Prostate gland (tissue), 2 donors: ENCODE measurements at regions of chrX and their contacts with region 1.

Region 1: GRCh38 chrX:49915361-49916222 is 6.8 kb upstream of the CLCN5 start:
- DNase-seq: peak; percentile 9
- H3K4me3 ChIP-seq: no peak overlapping the region
- H3K27ac ChIP-seq: no peak overlapping the region
- H3K4me1 ChIP-seq: no peaks in the 10 kb centered on the region
- H3K27me3 ChIP-seq: no peaks in the 10 kb centered on the region
- CTCF ChIP-seq: peak; percentile 42 to 65 (median 62)
- POLR2A ChIP-seq: no peak

Region 2: DNA sequence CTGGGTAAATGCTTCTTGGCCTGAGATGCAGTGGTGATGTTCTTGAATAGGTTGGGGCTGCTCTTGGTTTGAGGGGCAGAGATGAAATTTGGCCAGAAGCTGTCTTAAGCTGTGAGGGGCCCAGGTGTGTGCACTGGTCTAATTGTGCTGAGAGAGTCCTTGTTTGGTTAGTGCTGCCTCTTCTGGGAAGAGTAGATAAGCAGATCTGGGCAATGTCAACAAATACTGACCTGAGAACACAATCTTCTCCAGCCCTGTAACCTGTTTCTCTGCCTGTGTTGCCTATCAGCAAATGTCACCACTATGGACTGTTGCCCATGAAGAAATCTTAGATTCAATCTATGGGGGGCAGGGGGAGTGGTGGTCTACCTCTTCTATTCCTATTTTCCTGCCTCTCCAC is 53.5 kb before region 1 on chrX:
- intact Hi-C with region 1: no loop called
- DNase-seq: no peak
- H3K4me3 ChIP-seq: no peak overlapping the region
- H3K27ac ChIP-seq: no peak overlapping the region
- H3K4me1 ChIP-seq: no peaks in the 10 kb centered on the region
- H3K27me3 ChIP-seq: no peaks in the 10 kb centered on the region
- CTCF ChIP-seq: no peak
- POLR2A ChIP-seq: no peak

Region 3: GRCh38 chrX:49884290-49884862 is 31.2 kb before region 1 on chrX:
- intact Hi-C with region 1: loop called (anchors 5 kb)
- DNase-seq: peak; percentile 17
- H3K4me3 ChIP-seq: no peak overlapping the region
- H3K27ac ChIP-seq: no peak overlapping the region
- H3K4me1 ChIP-seq: no peaks in the 10 kb centered on the region
- H3K27me3 ChIP-seq: no peaks in the 10 kb centered on the region
- CTCF ChIP-seq: peak in 3 of 4 experiments; percentile 27 to 55 (median 47)
- POLR2A ChIP-seq: no peak

Region 4: DNA sequence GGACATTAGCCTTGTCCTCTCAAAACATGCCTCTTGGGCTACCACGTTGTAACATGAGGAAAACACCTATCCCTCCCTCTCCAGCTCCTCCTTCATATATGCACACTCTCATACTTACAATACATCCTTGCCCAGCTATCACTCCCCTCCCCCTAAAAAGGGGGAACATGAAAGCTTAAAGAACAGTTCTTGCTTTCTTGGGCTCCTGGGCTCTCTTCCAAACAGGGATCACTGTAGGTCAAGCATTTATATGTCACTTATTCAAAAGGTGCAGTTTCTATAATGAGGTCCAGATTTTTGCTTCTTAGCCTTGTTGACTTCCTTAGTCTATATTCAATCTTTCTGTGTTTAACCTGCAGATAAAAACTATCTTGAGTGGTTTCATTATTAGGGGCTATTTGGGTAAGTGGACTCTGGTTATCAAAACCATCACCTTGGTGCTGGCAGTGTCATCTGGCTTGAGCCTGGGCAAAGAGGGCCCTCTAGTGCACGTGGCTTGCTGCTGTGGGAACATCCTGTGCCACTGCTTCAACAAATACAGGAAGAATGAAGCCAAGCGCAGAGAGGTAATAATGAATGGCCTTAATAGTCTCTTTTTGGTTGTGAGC is 165.8 kb after region 1 on chrX:
- intact Hi-C with region 1: loop called (anchors 10 kb)
- DNase-seq: peak; percentile 31
- H3K4me3 ChIP-seq: no peak overlapping the region
- H3K27ac ChIP-seq: no peak overlapping the region
- H3K4me1 ChIP-seq: no peaks in the 10 kb centered on the region
- H3K27me3 ChIP-seq: no peaks in the 10 kb centered on the region
- CTCF ChIP-seq: peak in 1 of 4 experiments; percentile 24
- POLR2A ChIP-seq: no peak